ENCODE measurements at regions of chr11 and their contacts with region 1.

Region 1: GRCh38 chr11:65013692-65014145 is 241 bp upstream of the ARL2 start:
- DNase-seq: peak; percentile 96
- H3K4me3 Mint-ChIP-seq: peak overlapping the region; percentile 92
- H3K27ac Mint-ChIP-seq: peak overlapping the region; percentile 98
- H3K4me1 Mint-ChIP-seq: peaks cover 24% of the 10 kb centered on the region
- H3K27me3 Mint-ChIP-seq: no peaks in the 10 kb centered on the region

Region 2: GRCh38 chr11:64916775-64917662 is 96.7 kb before region 1 on chr11 and contains the start of gene ATG2A:
- intact Hi-C with region 1: loop called (anchors 1 kb)
- DNase-seq: peak; percentile 100
- H3K4me3 Mint-ChIP-seq: peak within 1 kb of the TSS; percentile 90
- H3K27ac Mint-ChIP-seq: peak within 1 kb of the TSS; percentile 92
- H3K4me1 Mint-ChIP-seq: peaks cover 23% of the 10 kb centered on the region
- H3K27me3 Mint-ChIP-seq: no peaks in the 10 kb centered on the region
- total RNA-seq, gene ATG2A: 22.5 and 23.1 TPM in 2 replicates

Region 3: GRCh38 chr11:65027213-65028067 is 13.7 kb after region 1 on chr11 and contains the start of gene SNX15:
- intact Hi-C with region 1: loop called (anchors 1 kb)
- DNase-seq: peak; percentile 98
- H3K4me3 Mint-ChIP-seq: peak within 1 kb of the TSS; percentile 74
- H3K27ac Mint-ChIP-seq: peak within 1 kb of the TSS; percentile 77
- H3K4me1 Mint-ChIP-seq: peaks cover 16% of the 10 kb centered on the region
- H3K27me3 Mint-ChIP-seq: no peaks in the 10 kb centered on the region
- total RNA-seq, gene SNX15: 15.9 and 17.9 TPM in 2 replicates

Region 4: GRCh38 chr11:65083834-65084597 is 70.3 kb after region 1 on chr11 and contains the starts of genes CDCA5 and ZFPL1:
- intact Hi-C with region 1: loop called (anchors 1 kb)
- DNase-seq: peak; percentile 100
- H3K4me3 Mint-ChIP-seq: peak within 1 kb of the TSS; percentile 99
- H3K27ac Mint-ChIP-seq: peak within 1 kb of the TSS; percentile 99
- H3K4me1 Mint-ChIP-seq: peaks cover 46% of the 10 kb centered on the region
- H3K27me3 Mint-ChIP-seq: peaks cover 2% of the 10 kb centered on the region
- total RNA-seq, gene CDCA5: 94.4 and 95.1 TPM in 2 replicates
- total RNA-seq, gene ZFPL1: 33.3 and 34.7 TPM in 2 replicates

Region 5: DNA sequence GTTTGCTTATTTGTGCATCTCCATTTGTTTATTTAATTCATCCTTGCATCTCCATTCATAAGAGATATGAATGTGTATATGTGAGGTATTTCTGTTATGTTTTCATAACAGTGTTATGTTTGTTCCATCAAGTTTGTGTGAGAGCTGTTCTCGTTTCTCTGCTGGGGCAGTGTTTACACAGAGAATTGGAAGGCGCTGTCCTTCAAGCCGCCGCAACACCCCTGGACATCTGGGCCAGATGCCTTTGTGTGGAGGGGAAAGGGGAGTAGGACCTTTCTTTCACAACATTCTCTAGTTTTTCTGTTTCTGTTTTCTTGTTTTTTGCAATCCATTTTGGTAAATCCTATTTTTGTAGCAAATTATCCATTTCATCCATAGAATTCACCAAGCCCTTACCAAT is 90.9 kb after region 1 on chr11:
- intact Hi-C with region 1: no loop called
- DNase-seq: no peak
- H3K4me3 Mint-ChIP-seq: no peak overlapping the region
- H3K27ac Mint-ChIP-seq: no peak overlapping the region
- H3K4me1 Mint-ChIP-seq: peaks cover 9% of the 10 kb centered on the region
- H3K27me3 Mint-ChIP-seq: no peaks in the 10 kb centered on the region

Measured in activated CD4-positive, alpha-beta T cell treated with anti-CD3 and anti-CD28 coated beads, Interleukin-2, amount 10 ng/mL, durations not matched to agents 24 days and 14 days (primary cell).